ENCODE measurements at regions of chr2 and their contacts with region 1.

Region 1: DNA sequence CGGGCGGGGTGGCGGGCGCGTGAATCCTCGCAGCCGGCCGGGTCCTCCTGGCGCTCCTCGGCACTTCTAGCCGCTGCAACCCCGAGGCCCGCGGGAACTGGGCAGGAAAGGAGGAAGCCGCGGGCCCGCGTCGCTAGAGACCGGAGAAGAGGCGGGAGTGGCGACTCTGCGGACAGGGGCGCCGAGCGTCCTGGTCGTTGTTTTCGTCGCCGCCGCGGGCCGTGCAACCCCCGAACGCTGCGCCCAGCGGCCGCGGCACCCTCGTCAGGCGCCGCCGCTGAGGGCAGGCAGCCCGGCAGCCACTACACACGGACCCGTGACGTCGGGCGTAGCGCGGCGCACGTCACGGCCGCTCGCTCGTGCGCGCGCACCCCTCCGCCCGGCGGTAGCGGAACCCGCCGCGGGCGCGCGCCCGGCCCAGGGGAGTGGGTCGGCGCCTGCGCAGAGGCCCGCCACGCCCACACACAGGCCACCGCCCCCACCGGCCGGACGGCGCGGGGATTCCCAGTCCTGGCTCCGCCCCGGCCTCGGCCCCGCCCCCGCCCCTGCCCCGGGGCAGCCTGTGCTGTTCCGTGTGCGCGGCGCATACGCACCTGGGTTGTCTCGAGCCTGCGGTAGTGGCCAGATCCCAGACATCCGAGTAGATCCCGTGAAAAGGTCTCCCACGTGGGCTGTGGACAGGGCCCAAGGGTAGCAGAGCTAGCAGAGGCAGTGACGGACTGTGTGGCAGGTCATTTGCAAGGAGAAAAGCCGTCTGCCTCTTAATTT is at the start of gene MAP3K2:
- DNase-seq: peak; percentile 89
- H3K4me3 Mint-ChIP-seq: peak within 1 kb of the TSS; percentile 96
- H3K27ac Mint-ChIP-seq: peak within 1 kb of the TSS; percentile 98
- H3K4me1 Mint-ChIP-seq: peaks cover 74% of the 10 kb centered on the region
- H3K27me3 Mint-ChIP-seq: no peaks in the 10 kb centered on the region
- total RNA-seq, gene MAP3K2: 64.1 and 66.1 TPM in 2 replicates

Region 2: DNA sequence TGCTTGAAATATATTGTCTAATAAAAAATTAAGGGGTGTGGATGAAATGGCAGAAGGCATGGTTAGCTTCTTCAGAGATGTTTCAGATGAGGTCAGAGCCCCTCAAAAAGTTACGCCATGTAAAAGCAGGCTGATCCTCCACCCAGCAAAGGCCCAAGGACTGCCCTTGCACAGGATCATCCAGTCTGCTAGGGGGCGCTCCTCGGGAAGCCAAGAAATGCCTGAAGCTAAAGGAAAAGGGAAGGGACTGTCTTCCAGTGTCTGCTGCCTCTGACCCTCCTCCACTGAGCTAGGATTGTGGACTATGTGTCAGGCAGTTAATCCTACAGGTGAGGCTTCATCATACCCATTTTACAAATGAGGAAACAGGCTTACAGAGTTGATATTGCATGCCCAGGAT is 523.0 kb before region 1 on chr2:
- intact Hi-C with region 1: no loop called
- DNase-seq: no peak
- H3K4me3 Mint-ChIP-seq: no peak overlapping the region
- H3K27ac Mint-ChIP-seq: no peak overlapping the region
- H3K4me1 Mint-ChIP-seq: no peaks in the 10 kb centered on the region
- H3K27me3 Mint-ChIP-seq: peaks cover 2% of the 10 kb centered on the region

Region 3: GRCh38 chr2:127081826-127082633 is 305.8 kb before region 1 on chr2:
- intact Hi-C with region 1: loop called (anchors 1 kb)
- DNase-seq: peak; percentile 72
- H3K4me3 Mint-ChIP-seq: peak overlapping the region; percentile 86
- H3K27ac Mint-ChIP-seq: peak overlapping the region; percentile 89
- H3K4me1 Mint-ChIP-seq: peaks cover 84% of the 10 kb centered on the region
- H3K27me3 Mint-ChIP-seq: peaks cover 2% of the 10 kb centered on the region

Region 4: DNA sequence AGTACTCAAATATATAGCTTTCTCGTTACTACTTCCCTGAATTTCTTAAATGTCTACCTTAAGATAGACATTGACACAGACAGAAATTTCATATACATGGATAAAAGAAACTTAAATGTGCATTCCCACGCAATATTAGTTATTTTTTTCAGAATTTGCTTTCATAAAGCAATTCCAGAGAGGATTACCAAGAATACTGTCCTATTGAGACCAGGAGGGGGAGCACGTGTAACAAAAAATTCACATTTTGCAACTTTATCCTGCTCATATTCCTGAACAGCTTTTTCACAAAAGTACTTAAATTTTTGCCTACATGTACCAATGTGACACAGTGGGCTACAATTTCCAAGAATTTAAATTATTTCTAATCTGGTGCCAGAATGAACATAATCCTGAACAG is 63.2 kb before region 1 on chr2:
- intact Hi-C with region 1: loop called (anchors 1 kb)
- DNase-seq: no peak
- H3K4me3 Mint-ChIP-seq: no peak overlapping the region
- H3K27ac Mint-ChIP-seq: no peak overlapping the region
- H3K4me1 Mint-ChIP-seq: peaks cover 7% of the 10 kb centered on the region
- H3K27me3 Mint-ChIP-seq: no peaks in the 10 kb centered on the region

Region 5: GRCh38 chr2:127408004-127408806 is 20.4 kb after region 1 on chr2:
- intact Hi-C with region 1: loop called (anchors 1 kb)
- DNase-seq: peak; percentile 80
- H3K4me3 Mint-ChIP-seq: peak overlapping the region; percentile 53
- H3K27ac Mint-ChIP-seq: peak overlapping the region; percentile 71
- H3K4me1 Mint-ChIP-seq: peaks cover 28% of the 10 kb centered on the region
- H3K27me3 Mint-ChIP-seq: peaks cover 15% of the 10 kb centered on the region

Region 6: GRCh38 chr2:127701193-127701650 is 313.4 kb after region 1 on chr2 and contains the start of gene SFT2D3:
- intact Hi-C with region 1: loop called (anchors 2 kb)
- DNase-seq: peak; percentile 89
- H3K4me3 Mint-ChIP-seq: peak within 1 kb of the TSS; percentile 92
- H3K27ac Mint-ChIP-seq: peak within 1 kb of the TSS; percentile 97
- H3K4me1 Mint-ChIP-seq: peaks cover 35% of the 10 kb centered on the region
- H3K27me3 Mint-ChIP-seq: no peaks in the 10 kb centered on the region
- total RNA-seq, gene SFT2D3: 6.6 and 7.1 TPM in 2 replicates